Heart left ventricle (tissue), 16 donors: ENCODE measurements at regions of chr14 and their contacts with region 1.

Region 1: DNA sequence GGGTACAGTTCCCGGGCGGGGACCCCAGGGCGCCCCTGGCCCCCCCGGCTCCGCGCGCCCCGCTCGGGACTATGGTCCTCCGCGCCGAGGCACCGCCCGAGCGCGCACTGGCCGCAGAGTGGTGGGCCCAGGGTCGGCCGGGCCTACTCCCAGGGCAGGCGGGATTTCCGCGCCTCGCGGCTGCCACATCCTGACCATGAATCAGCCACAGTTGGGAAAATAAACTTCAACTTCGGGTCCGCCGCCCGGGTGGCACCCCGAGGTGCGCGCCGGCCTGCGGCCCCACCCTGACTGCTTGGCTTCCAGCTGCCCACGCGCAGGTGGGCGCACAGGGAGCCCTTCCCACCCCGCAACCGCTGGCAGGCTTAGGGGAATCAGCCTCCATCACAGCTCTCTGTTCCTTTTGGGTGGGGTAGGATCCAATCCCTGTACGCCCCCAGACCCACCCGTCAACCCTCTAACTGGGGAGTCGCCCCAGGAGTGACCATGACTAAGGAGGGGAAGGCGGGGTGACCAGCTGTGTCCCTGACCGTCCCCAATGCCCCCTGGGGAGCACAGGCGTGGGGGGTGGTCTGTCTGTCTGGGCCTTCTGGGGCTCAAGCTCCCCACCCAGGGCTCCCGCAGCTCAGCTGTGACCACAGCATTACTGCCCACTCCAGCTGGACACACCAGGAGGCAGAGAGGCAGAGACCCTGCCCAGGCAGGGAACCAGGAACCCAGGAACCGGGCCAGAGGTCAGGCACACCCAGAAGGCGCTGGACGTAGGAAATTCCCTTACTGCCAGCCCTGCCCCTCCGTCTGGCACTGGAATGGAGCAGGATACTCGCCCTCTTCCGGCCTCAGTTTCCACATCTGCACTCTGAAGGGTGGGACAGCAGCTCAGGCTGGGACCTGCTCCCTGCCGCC is 716 bp downstream of the INF2 start:
- DNase-seq: peak in 2 of 5 donors; percentile 46 to 71
- ATAC-seq: peak in 1 of 4 donors; percentile 30
- H3K4me3 ChIP-seq: peak overlapping the region; percentile 71 to 100 (median 93)
- H3K27ac ChIP-seq: peak overlapping the region; percentile 1 to 93 (median 86)
- H3K4me1 ChIP-seq: peaks cover 18 to 83% (median 66%) of the 10 kb centered on the region in 12 donors
- H3K27me3 ChIP-seq: no peaks in the 10 kb centered on the region
- CTCF ChIP-seq: no peak
- POLR2A ChIP-seq: no peak

Region 2: GRCh38 chr14:104206281-104206904 is 483.7 kb before region 1 on chr14:
- intact Hi-C with region 1: no loop called
- DNase-seq: no peak
- ATAC-seq: peak in 3 of 4 donors; percentile 31 to 64 (median 64)
- H3K4me3 ChIP-seq: no peak overlapping the region
- H3K27ac ChIP-seq: no peak overlapping the region
- H3K4me1 ChIP-seq: no peaks in the 10 kb centered on the region
- H3K27me3 ChIP-seq: peaks cover 0 to 21% (median 0%) of the 10 kb centered on the region in 9 donors
- CTCF ChIP-seq: no peak
- POLR2A ChIP-seq: no peak

Region 3: GRCh38 chr14:104650057-104650981 is 39.8 kb before region 1 on chr14:
- intact Hi-C with region 1: loop called in 2 of 10 experiments (anchors 2 to 5 kb)
- DNase-seq: peak; percentile 66 to 83 (median 71)
- ATAC-seq: peak; percentile 53 to 90 (median 80)
- H3K4me3 ChIP-seq: peak overlapping the region in 11 of 12 donors; percentile 14 to 63 (median 52)
- H3K27ac ChIP-seq: peak overlapping the region in 1 of 12 donors; percentile 13
- H3K4me1 ChIP-seq: peaks cover 0 to 17% (median 8%) of the 10 kb centered on the region in 12 donors
- H3K27me3 ChIP-seq: peaks cover 0 to 2% (median 0%) of the 10 kb centered on the region in 9 donors
- CTCF ChIP-seq: peak in 11 of 12 donors; percentile 94 to 100 (median 97)
- POLR2A ChIP-seq: no peak

Region 4: DNA sequence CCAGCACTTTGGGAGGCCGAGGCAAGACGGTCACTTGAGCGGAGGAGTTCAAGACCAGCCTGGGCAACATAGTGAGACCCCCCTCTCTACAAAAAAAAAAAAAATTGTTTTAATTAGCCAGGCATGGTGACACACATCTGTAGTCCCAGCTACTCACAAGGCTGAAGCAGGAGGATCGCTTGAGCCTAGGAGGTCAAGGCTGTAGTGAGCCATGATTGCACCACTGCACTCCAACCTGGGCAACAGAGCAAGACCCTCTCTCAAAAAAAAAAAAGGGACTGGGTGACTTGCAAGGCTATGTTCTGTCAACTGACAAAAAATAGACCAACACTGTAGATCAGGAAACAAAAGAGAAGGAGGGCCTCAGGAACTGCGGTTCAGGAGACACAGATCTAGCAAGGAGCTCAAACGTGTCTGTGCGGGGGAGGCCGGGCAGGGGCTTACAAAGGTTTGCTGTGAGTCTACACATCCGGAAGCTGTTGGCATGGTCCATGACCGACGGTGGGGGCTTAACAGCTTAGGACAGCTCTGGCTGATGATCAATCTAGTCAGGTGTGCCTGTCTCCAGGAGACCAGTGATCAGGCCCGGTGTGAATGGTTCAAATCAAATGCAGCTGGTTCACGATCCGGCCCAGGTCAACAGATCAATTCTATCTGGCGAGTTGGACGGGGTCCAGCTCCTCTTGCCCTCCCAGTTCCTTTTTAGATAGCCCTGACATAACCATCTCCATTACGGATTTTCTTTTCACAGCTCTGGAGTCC is 32.4 kb before region 1 on chr14:
- intact Hi-C with region 1: loop called in 2 of 10 experiments (anchors 2 to 5 kb)
- DNase-seq: no peak
- ATAC-seq: no peak
- H3K4me3 ChIP-seq: no peak overlapping the region
- H3K27ac ChIP-seq: no peak overlapping the region
- H3K4me1 ChIP-seq: peaks cover 0 to 27% (median 12%) of the 10 kb centered on the region in 12 donors
- H3K27me3 ChIP-seq: peaks cover 0 to 18% (median 0%) of the 10 kb centered on the region in 9 donors
- CTCF ChIP-seq: no peak
- POLR2A ChIP-seq: no peak